HAP-1 (cell line): ENCODE measurements at regions of chr1 and their contacts with region 1.

Region 1: DNA sequence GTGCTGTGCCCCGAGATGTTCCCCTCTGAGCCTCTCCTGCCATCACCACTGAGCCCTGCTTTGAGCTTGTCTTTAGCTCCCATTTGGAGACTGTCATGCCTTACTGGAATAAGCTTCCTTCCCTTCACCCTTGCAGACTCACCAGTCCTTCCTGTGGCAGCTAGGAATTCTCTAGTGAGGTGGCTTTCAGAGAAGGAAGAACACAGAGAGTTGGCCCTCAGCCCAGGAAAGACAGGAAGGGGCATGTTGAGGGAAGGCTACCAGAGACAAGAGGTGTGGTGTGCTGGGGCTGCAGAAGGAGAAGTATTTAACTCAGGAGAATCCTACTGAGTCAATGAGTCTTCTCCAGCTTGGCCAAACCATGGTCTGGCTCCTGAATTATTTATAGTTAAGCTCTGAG is 76.3 kb downstream of the UCK2 start:
- DNase-seq: no peak
- H3K4me3 ChIP-seq: no peak overlapping the region
- H3K4me1 ChIP-seq: no peaks in the 10 kb centered on the region
- H3K27me3 ChIP-seq: no peaks in the 10 kb centered on the region

Region 2: DNA sequence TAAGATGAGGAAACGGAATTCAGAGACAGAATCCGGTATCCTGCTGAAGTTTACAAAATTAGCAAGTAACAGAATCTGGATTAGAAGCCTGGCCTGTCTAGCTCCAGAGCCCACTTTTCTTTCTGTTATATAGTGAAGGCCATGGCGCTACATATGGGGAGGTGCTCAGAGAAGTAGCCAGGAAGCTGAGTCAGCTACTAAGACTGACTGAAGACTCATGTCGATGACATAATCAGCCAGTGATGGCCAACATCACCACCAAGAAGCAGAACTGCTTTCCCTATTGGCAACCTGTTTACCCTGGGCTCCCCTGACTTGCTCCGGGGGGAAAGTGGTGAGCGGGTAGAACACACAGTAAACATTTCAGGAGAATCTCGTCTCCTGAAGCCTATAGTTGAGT is 341.1 kb before region 1 on chr1:
- in situ Hi-C with region 1: no loop called
- DNase-seq: no peak
- H3K4me3 ChIP-seq: no peak overlapping the region
- H3K4me1 ChIP-seq: no peaks in the 10 kb centered on the region
- H3K27me3 ChIP-seq: peaks cover 36% of the 10 kb centered on the region

Region 3: GRCh38 chr1:165717918-165718515 is 185.7 kb before region 1 on chr1:
- in situ Hi-C with region 1: loop called (anchors 5 kb)
- DNase-seq: peak; percentile 52 to 65
- H3K4me3 ChIP-seq: no peak overlapping the region
- H3K4me1 ChIP-seq: peaks cover 3% of the 10 kb centered on the region; the same call in 1 of the 2 replicates
- H3K27me3 ChIP-seq: no peaks in the 10 kb centered on the region; the same call in 1 of the 2 replicates